ENCODE measurements at regions of chr7 and their contacts with region 1.

Region 1: GRCh38 chr7:63008366-63008765 is 990.3 kb upstream of the ZNF722 start:
- DNase-seq: peak; percentile 10
- H3K4me3 ChIP-seq: no peak overlapping the region
- H3K27ac ChIP-seq: no peak overlapping the region
- H3K4me1 ChIP-seq: no peaks in the 10 kb centered on the region
- H3K27me3 ChIP-seq: no peaks in the 10 kb centered on the region

Region 2: DNA sequence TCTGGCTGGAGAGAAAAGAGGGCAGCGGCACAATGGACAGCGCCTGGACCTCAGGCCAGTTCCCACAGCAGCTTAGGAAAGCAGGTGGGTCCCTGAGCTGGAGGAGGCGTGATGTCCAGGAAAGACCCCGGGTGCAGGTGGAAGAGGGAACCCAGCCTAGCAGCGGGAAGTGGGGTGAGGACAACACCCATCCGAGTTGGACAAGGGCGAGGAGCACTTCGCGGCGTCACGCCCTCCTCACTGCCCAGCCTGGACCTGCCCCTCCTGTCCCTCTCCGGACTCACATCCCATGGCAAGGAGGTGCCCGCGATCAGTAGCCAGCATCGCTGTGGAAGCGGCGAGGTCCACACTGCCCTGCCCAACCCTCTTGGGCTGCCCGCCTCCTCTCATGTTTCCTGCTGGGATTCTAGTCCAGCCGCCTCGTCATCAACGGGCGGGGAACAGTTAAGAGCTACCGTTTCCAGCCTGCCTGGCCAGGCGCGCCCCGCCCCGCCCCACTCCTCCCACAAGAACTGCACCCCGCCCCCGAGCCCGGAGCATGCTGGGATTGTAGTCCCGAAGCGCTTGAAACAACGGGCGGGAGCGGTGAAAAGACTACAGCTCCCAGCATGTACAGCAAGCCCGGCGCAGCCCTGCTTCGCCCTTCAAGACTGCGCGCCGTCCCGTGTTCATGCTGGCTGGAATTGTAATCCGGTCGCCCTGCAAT is 59.7 kb after region 1 on chr7:
- in situ Hi-C with region 1: loop called (anchors 10 kb)
- DNase-seq: no peak
- H3K4me3 ChIP-seq: no peak overlapping the region
- H3K27ac ChIP-seq: no peak overlapping the region
- H3K4me1 ChIP-seq: no peaks in the 10 kb centered on the region
- H3K27me3 ChIP-seq: no peaks in the 10 kb centered on the region

Region 3: GRCh38 chr7:64618785-64619456 is 1610.6 kb after region 1 on chr7:
- in situ Hi-C with region 1: loop called (anchors 25 kb)
- DNase-seq: peak; percentile 68
- H3K4me3 ChIP-seq: no peak overlapping the region
- H3K27ac ChIP-seq: no peak overlapping the region
- H3K4me1 ChIP-seq: no peaks in the 10 kb centered on the region
- H3K27me3 ChIP-seq: no peaks in the 10 kb centered on the region

Measured in GM23248 (cell line).